GM12878 (cell line): ENCODE measurements at regions of chr9 and their contacts with region 1.

Region 1: GRCh38 chr9:91949946-91950664 is at the start of gene ROR2:
- DNase-seq: no peak
- ATAC-seq: peak; percentile 92
- H3K4me3 ChIP-seq: peak within 1 kb of the TSS; percentile 11; the same call in 1 of the 2 replicates
- H3K27ac ChIP-seq: no peak within 1 kb of the TSS
- H3K4me1 ChIP-seq: no peaks in the 10 kb centered on the region
- H3K27me3 ChIP-seq: peaks cover 10 to 26% of the 10 kb centered on the region in 2 experiments
- CTCF ChIP-seq: peak; percentile 34 to 36 (median 35); a peak in 4 of 6 replicates
- EP300 ChIP-seq: no peak
- POLR2A ChIP-seq: no peak
- RAD21 ChIP-seq: peak; percentile 22; the same call in 1 of the 2 replicates
- polyA plus RNA-seq, gene ROR2: not detected

Region 2: DNA sequence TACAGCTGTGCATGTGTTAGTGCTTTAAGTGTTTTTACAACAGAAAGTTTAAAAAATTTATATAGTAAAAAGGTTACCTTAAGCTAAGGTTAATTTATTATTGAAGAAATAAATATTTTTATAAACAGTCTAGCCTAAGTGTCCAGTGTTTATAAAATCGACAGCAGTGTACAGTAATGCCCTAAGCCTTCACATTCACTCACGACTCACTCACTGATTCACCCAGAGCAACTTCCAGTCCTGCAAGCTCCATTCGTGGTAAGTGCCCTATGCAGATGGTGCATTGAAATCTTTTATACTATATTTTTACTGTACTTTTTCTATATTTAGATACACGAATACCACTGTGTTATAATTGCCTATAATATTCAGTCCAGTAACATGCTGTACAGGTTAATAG is 159.2 kb before region 1 on chr9:
- CTCF ChIA-PET with region 1: no interaction called
- POLR2A ChIA-PET with region 1: no interaction called
- RAD21 ChIA-PET with region 1: no interaction called
- SMC1A ChIA-PET with region 1: no interaction called
- in situ Hi-C with region 1: no loop called
- intact Hi-C with region 1: no loop called
- DNase-seq: no peak
- ATAC-seq: no peak
- H3K4me3 ChIP-seq: no peak overlapping the region
- H3K27ac ChIP-seq: no peak overlapping the region
- H3K4me1 ChIP-seq: no peaks in the 10 kb centered on the region
- H3K27me3 ChIP-seq: no peaks in the 10 kb centered on the region
- CTCF ChIP-seq: no peak
- EP300 ChIP-seq: no peak
- POLR2A ChIP-seq: no peak
- RAD21 ChIP-seq: no peak

Region 3: DNA sequence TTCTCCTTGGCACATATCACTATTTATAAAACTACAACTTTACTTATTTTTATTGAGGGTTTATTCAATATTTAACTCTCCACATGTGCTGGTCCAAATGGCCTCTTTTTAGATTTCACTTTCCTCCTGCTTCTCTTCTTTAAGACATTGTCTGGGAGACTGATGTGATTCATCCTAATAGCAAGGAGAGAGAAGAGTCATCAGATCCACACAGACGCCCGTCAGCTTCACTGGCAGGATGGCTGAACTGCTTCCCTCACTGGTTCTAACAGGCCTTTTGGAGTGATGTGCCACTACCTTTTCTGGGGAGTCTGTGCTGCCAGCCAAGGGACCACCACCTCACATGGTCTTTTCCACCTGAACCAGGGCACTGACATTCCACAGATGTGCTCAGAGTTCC is 16.4 kb after region 1 on chr9:
- CTCF ChIA-PET with region 1: interaction called, 19 read pairs
- POLR2A ChIA-PET with region 1: no interaction called
- RAD21 ChIA-PET with region 1: no interaction called
- SMC1A ChIA-PET with region 1: interaction called, 3 read pairs
- in situ Hi-C with region 1: no loop called
- intact Hi-C with region 1: no loop called
- DNase-seq: no peak
- ATAC-seq: no peak
- H3K4me3 ChIP-seq: no peak overlapping the region
- H3K27ac ChIP-seq: no peak overlapping the region
- H3K4me1 ChIP-seq: no peaks in the 10 kb centered on the region
- H3K27me3 ChIP-seq: no peaks in the 10 kb centered on the region; a peak in 1 of 4 replicates
- CTCF ChIP-seq: no peak
- EP300 ChIP-seq: no peak
- POLR2A ChIP-seq: no peak
- RAD21 ChIP-seq: no peak